ENCODE measurements at regions of chr11 and their contacts with region 1.

Region 1: DNA sequence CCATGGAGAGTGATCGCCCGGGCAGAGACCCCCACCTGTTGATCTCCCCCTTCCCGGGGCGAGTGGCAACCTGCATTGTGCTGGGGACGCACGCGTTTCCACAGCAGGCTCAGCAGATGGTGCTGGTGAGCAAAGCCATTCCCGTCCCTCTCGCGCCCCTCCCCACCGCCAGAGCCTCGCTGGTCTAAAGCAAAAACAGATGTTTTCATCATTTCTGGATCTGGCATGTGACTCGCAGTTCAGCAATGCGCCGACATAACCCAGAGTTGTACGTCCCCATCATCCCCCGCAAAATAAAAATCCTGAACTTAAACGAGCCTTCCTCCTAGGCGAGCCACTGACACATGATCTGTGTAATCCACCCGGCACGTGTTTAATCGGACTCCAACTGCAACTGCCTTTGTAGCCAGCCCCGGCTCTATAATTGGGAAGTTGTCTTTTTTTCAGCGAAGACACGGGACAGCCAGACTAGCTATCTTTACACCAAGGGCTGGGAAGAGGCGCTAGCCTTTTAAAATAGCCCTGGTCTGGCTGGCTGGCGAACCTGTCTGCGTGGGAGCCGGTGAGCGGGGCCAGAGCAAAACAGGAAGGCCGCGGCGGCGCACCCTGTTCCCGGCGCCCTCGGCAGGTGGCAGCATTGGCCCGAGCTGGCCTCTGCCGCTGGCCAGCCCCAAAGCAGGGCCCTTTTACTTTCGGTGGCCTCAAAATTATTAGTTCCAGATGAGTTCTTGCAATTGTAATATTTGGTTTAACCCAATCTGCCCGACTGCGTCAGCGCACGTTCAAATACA is 203.0 kb upstream of the SORL1-AS1 start:
- DNase-seq: peak; percentile 37 to 76 (median 62)
- ATAC-seq: peak; percentile 87
- H3K4me3 ChIP-seq: peak overlapping the region; percentile 81
- H3K4me3 Mint-ChIP-seq: peak overlapping the region; percentile 76 to 94 (median 86)
- H3K27ac ChIP-seq: peak overlapping the region; percentile 48
- H3K27ac Mint-ChIP-seq: peak overlapping the region; percentile 10 to 90 (median 60)
- H3K4me1 ChIP-seq: peaks cover 12% of the 10 kb centered on the region in 2 donors
- H3K4me1 Mint-ChIP-seq: peaks cover 15 to 34% (median 26%) of the 10 kb centered on the region in 7 donors
- H3K27me3 ChIP-seq: no peaks in the 10 kb centered on the region
- H3K27me3 Mint-ChIP-seq: peaks cover 0 to 25% (median 0%) of the 10 kb centered on the region in 5 donors

Region 2: GRCh38 chr11:120034881-120035630 is 1620.7 kb before region 1 on chr11:
- CTCF ChIA-PET with region 1: no interaction called
- POLR2A ChIA-PET with region 1: no interaction called
- intact Hi-C with region 1: no loop called
- DNase-seq: no peak
- ATAC-seq: no peak
- H3K4me3 ChIP-seq: no peak overlapping the region
- H3K4me3 Mint-ChIP-seq: no peak overlapping the region
- H3K27ac ChIP-seq: no peak overlapping the region
- H3K27ac Mint-ChIP-seq: no peak overlapping the region
- H3K4me1 ChIP-seq: no peaks in the 10 kb centered on the region
- H3K4me1 Mint-ChIP-seq: no peaks in the 10 kb centered on the region
- H3K27me3 ChIP-seq: no peaks in the 10 kb centered on the region
- H3K27me3 Mint-ChIP-seq: peaks cover 2 to 27% (median 22%) of the 10 kb centered on the region in 5 donors

Region 3: GRCh38 chr11:121643535-121644512 is 11.9 kb before region 1 on chr11:
- CTCF ChIA-PET with region 1: interaction called, 12 read pairs
- POLR2A ChIA-PET with region 1: no interaction called
- intact Hi-C with region 1: no loop called
- DNase-seq: no peak
- ATAC-seq: no peak
- H3K4me3 ChIP-seq: no peak overlapping the region
- H3K4me3 Mint-ChIP-seq: no peak overlapping the region
- H3K27ac ChIP-seq: no peak overlapping the region
- H3K27ac Mint-ChIP-seq: no peak overlapping the region
- H3K4me1 ChIP-seq: no peaks in the 10 kb centered on the region
- H3K4me1 Mint-ChIP-seq: peaks cover 0 to 12% (median 0%) of the 10 kb centered on the region in 7 donors
- H3K27me3 ChIP-seq: no peaks in the 10 kb centered on the region
- H3K27me3 Mint-ChIP-seq: no peaks in the 10 kb centered on the region

Region 4: GRCh38 chr11:121671283-121672168 is 15.8 kb after region 1 on chr11:
- CTCF ChIA-PET with region 1: no interaction called
- POLR2A ChIA-PET with region 1: no interaction called
- intact Hi-C with region 1: no loop called
- DNase-seq: no peak
- ATAC-seq: no peak
- H3K4me3 ChIP-seq: no peak overlapping the region
- H3K4me3 Mint-ChIP-seq: no peak overlapping the region
- H3K27ac ChIP-seq: no peak overlapping the region
- H3K27ac Mint-ChIP-seq: no peak overlapping the region
- H3K4me1 ChIP-seq: no peaks in the 10 kb centered on the region
- H3K4me1 Mint-ChIP-seq: peaks cover 0 to 2% (median 0%) of the 10 kb centered on the region in 7 donors
- H3K27me3 ChIP-seq: no peaks in the 10 kb centered on the region
- H3K27me3 Mint-ChIP-seq: no peaks in the 10 kb centered on the region

Region 5: DNA sequence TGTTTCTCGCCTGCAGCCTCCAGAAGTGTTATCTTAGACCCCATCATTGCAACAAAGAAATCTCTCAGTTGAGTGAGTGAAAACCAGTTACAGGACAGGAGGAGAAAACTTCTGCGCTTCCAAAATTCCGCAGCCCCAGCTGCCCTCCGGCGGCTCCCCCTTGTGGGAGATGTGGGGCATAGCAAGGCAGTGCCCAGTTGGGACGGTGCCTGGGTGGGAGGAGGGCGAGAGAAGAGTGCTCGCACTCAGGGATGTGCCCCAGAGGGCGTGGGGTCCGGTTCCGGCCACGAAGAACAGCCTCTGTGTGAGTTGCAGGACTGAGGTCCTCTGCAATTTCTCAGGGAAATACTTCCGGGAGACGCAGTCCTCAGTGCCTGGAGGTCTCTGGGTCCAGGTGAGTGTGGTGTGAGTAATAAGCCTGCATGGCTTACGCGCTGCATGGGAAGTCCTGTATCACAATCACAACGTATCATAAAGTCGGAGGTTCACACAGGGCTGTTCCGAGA is 547.3 kb after region 1 on chr11:
- CTCF ChIA-PET with region 1: no interaction called
- POLR2A ChIA-PET with region 1: no interaction called
- intact Hi-C with region 1: loop called in 1 of 2 experiments (anchors 1 kb)
- DNase-seq: peak in 6 of 9 donors; percentile 3 to 50 (median 16)
- ATAC-seq: peak; percentile 76
- H3K4me3 ChIP-seq: no peak overlapping the region
- H3K4me3 Mint-ChIP-seq: no peak overlapping the region
- H3K27ac ChIP-seq: no peak overlapping the region
- H3K27ac Mint-ChIP-seq: no peak overlapping the region
- H3K4me1 ChIP-seq: no peaks in the 10 kb centered on the region
- H3K4me1 Mint-ChIP-seq: peaks cover 0 to 9% (median 0%) of the 10 kb centered on the region in 7 donors
- H3K27me3 ChIP-seq: no peaks in the 10 kb centered on the region
- H3K27me3 Mint-ChIP-seq: peaks cover 21 to 68% (median 42%) of the 10 kb centered on the region in 5 donors

Region 6: GRCh38 chr11:122505304-122506006 is 849.7 kb after region 1 on chr11:
- CTCF ChIA-PET with region 1: no interaction called
- POLR2A ChIA-PET with region 1: no interaction called
- intact Hi-C with region 1: loop called in 1 of 2 experiments (anchors 1 kb)
- DNase-seq: peak in 8 of 9 donors; percentile 0 to 51 (median 18)
- ATAC-seq: peak; percentile 78
- H3K4me3 ChIP-seq: no peak overlapping the region
- H3K4me3 Mint-ChIP-seq: no peak overlapping the region
- H3K27ac ChIP-seq: no peak overlapping the region
- H3K27ac Mint-ChIP-seq: no peak overlapping the region
- H3K4me1 ChIP-seq: no peaks in the 10 kb centered on the region
- H3K4me1 Mint-ChIP-seq: peaks cover 0 to 4% (median 0%) of the 10 kb centered on the region in 7 donors
- H3K27me3 ChIP-seq: no peaks in the 10 kb centered on the region
- H3K27me3 Mint-ChIP-seq: peaks cover 10 to 58% (median 44%) of the 10 kb centered on the region in 5 donors

Region 7: GRCh38 chr11:122578168-122578825 is 922.6 kb after region 1 on chr11:
- CTCF ChIA-PET with region 1: no interaction called
- POLR2A ChIA-PET with region 1: no interaction called
- intact Hi-C with region 1: loop called in 1 of 2 experiments (anchors 2 kb)
- DNase-seq: no peak
- ATAC-seq: no peak
- H3K4me3 ChIP-seq: no peak overlapping the region
- H3K4me3 Mint-ChIP-seq: no peak overlapping the region
- H3K27ac ChIP-seq: no peak overlapping the region
- H3K27ac Mint-ChIP-seq: no peak overlapping the region
- H3K4me1 ChIP-seq: no peaks in the 10 kb centered on the region
- H3K4me1 Mint-ChIP-seq: peaks cover 5 to 17% (median 11%) of the 10 kb centered on the region in 7 donors
- H3K27me3 ChIP-seq: no peaks in the 10 kb centered on the region
- H3K27me3 Mint-ChIP-seq: peaks cover 0 to 7% (median 0%) of the 10 kb centered on the region in 5 donors